GM13977 (cell line): ENCODE measurements at regions of chr3 and their contacts with region 1.

Region 1: GRCh38 chr3:72938471-72939265 is 50.8 kb downstream of the GXYLT2 start:
- DNase-seq: peak; percentile 78
- CTCF ChIP-seq: peak; percentile 44

Region 2: GRCh38 chr3:73060302-73060723 is 121.6 kb after region 1 on chr3:
- in situ Hi-C with region 1: loop called (anchors 10 kb)
- DNase-seq: no peak
- CTCF ChIP-seq: no peak